ENCODE measurements at regions of chr14 and their contacts with region 1.

Region 1: GRCh38 chr14:65373679-65374039 is 38.9 kb upstream of the FUT8 start:
- DNase-seq: no peak
- H3K4me3 Mint-ChIP-seq: no peak overlapping the region
- H3K27ac Mint-ChIP-seq: no peak overlapping the region
- H3K4me1 Mint-ChIP-seq: peaks cover 32% of the 10 kb centered on the region
- H3K27me3 Mint-ChIP-seq: no peaks in the 10 kb centered on the region

Region 2: GRCh38 chr14:65387628-65388027 is 14.0 kb after region 1 on chr14:
- CTCF ChIA-PET with region 1: no interaction called
- intact Hi-C with region 1: loop called (anchors 2 kb)
- DNase-seq: no peak
- H3K4me3 Mint-ChIP-seq: no peak overlapping the region
- H3K27ac Mint-ChIP-seq: no peak overlapping the region
- H3K4me1 Mint-ChIP-seq: no peaks in the 10 kb centered on the region
- H3K27me3 Mint-ChIP-seq: no peaks in the 10 kb centered on the region

Measured in activated naive CD4-positive, alpha-beta T cell treated with anti-CD3 and anti-CD28 coated beads for 36 hours (primary cell).